ENCODE measurements at regions of chr17 and their contacts with region 1.

Region 1: DNA sequence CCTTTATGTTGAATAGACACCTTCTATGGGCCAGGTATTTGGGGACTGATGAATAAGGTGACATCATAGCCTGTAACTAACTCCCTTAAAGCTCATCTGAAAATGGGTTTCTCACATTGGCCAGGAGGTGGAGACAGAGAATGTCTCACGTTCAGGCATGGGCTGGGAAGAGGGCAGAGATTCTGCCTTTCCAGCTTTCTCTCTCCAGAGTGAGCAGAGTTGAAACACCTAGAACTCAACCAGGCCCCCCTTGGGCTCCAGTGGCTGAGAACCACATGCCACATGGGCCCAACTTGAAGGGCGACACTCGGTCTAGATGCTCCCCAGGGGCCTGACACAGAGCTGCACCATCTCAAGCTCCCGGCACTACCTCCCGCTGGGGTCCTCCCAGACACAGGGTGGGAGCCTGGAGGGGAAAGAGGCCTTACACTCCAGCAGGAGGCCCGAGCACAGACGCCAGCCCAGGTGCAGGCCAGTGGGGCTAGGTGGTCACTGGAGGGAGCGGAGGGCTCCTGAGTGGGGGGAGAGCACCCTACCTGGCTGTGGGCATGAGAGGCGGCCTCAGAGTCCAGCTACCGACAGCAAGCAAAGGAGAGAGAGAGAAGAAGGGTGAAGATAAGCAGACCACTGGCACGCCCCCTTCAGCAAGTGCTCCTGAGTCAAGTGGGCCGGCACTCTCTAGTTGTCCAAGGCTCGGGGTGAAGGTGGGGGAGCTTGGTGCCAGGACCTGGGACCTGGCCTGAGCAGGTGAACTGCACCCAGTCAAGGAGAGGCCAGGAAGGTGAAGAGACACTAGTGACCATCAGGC is 55.9 kb downstream of the MYO18A start:
- DNase-seq: peak in 6 of 9 donors; percentile 34 to 59 (median 48)
- ATAC-seq: peak; percentile 87
- H3K4me3 ChIP-seq: no peak overlapping the region
- H3K4me3 Mint-ChIP-seq: no peak overlapping the region
- H3K27ac ChIP-seq: no peak overlapping the region
- H3K27ac Mint-ChIP-seq: peak overlapping the region in 2 of 9 donors; percentile 54 to 55
- H3K4me1 ChIP-seq: no peaks in the 10 kb centered on the region
- H3K4me1 Mint-ChIP-seq: peaks cover 0 to 16% (median 5%) of the 10 kb centered on the region in 7 donors
- H3K27me3 ChIP-seq: no peaks in the 10 kb centered on the region
- H3K27me3 Mint-ChIP-seq: no peaks in the 10 kb centered on the region

Region 2: GRCh38 chr17:28518132-28518531 is 606.2 kb before region 1 on chr17:
- CTCF ChIA-PET with region 1: no interaction called
- POLR2A ChIA-PET with region 1: no interaction called
- intact Hi-C with region 1: no loop called
- DNase-seq: no peak
- ATAC-seq: peak; percentile 54
- H3K4me3 ChIP-seq: no peak overlapping the region
- H3K4me3 Mint-ChIP-seq: no peak overlapping the region
- H3K27ac ChIP-seq: no peak overlapping the region
- H3K27ac Mint-ChIP-seq: no peak overlapping the region
- H3K4me1 ChIP-seq: no peaks in the 10 kb centered on the region
- H3K4me1 Mint-ChIP-seq: peaks cover 0 to 4% (median 0%) of the 10 kb centered on the region in 7 donors
- H3K27me3 ChIP-seq: no peaks in the 10 kb centered on the region
- H3K27me3 Mint-ChIP-seq: peaks cover 6 to 21% (median 8%) of the 10 kb centered on the region in 5 donors

Region 3: DNA sequence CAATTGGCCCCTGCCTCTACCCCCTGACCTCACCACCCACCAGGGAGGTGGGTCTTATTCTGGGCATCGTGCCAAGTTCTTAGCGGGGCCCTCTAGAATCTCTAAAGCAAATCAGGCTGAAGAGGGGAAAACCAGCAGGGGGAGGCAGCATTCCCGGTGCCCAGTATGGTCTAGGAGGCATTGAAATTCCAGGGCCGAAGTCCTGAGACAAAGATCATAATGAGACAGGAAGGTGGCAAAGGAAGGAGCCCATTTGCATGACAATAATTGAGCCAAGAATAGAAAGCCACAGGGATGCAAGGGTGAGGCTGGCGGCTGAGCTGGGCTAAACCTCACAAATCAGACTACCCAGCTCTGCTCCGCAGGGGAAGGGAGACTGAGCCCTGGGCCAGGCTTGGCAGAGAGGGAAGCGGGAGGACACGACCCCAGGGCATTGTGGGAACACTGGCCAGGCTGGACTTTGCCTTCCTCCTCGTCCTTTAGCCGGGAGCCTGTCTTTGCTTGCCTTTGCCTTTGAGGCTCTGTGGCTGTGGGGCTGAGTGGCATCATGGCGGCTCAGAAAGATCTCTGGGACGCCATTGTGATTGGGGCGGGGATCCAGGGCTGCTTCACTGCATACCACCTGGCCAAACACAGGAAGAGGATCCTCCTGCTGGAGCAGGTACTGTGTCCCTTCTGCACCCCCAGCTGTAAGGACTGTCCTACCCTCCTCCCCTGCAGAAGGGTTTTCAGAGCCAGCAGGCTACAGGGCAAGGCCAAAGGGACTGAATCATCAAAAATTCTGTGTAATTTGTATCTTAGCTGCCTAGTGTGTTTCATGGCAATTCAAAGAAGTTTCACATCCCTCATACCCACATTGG is 81.4 kb before region 1 on chr17 and contains the start of gene PIPOX:
- CTCF ChIA-PET with region 1: no interaction called
- POLR2A ChIA-PET with region 1: no interaction called
- intact Hi-C with region 1: no loop called
- DNase-seq: no peak
- ATAC-seq: peak; percentile 84
- H3K4me3 ChIP-seq: no peak within 1 kb of the TSS
- H3K4me3 Mint-ChIP-seq: no peak within 1 kb of the TSS
- H3K27ac ChIP-seq: no peak within 1 kb of the TSS
- H3K27ac Mint-ChIP-seq: no peak within 1 kb of the TSS
- H3K4me1 ChIP-seq: no peaks in the 10 kb centered on the region
- H3K4me1 Mint-ChIP-seq: peaks cover 0 to 14% (median 0%) of the 10 kb centered on the region in 7 donors
- H3K27me3 ChIP-seq: no peaks in the 10 kb centered on the region
- H3K27me3 Mint-ChIP-seq: peaks cover 0 to 23% (median 12%) of the 10 kb centered on the region in 5 donors
- total RNA-seq, gene PIPOX: 1.6 to 6.4 (median 5.3) TPM

Region 4: GRCh38 chr17:29102741-29103181 is 21.6 kb before region 1 on chr17:
- CTCF ChIA-PET with region 1: no interaction called
- POLR2A ChIA-PET with region 1: no interaction called
- intact Hi-C with region 1: no loop called
- DNase-seq: no peak
- ATAC-seq: no peak
- H3K4me3 ChIP-seq: no peak overlapping the region
- H3K4me3 Mint-ChIP-seq: no peak overlapping the region
- H3K27ac ChIP-seq: no peak overlapping the region
- H3K27ac Mint-ChIP-seq: peak overlapping the region in 1 of 9 donors; percentile 14
- H3K4me1 ChIP-seq: no peaks in the 10 kb centered on the region
- H3K4me1 Mint-ChIP-seq: peaks cover 0 to 13% (median 3%) of the 10 kb centered on the region in 7 donors
- H3K27me3 ChIP-seq: no peaks in the 10 kb centered on the region
- H3K27me3 Mint-ChIP-seq: no peaks in the 10 kb centered on the region

Region 5: GRCh38 chr17:29140051-29140621 is 15.8 kb after region 1 on chr17:
- CTCF ChIA-PET with region 1: interaction called, 93 read pairs
- POLR2A ChIA-PET with region 1: interaction called, 20 read pairs
- intact Hi-C with region 1: loop called (anchors 1 kb)
- DNase-seq: peak in 8 of 9 donors; percentile 48 to 81 (median 51)
- ATAC-seq: peak; percentile 73
- H3K4me3 ChIP-seq: peak overlapping the region; percentile 76
- H3K4me3 Mint-ChIP-seq: peak overlapping the region; percentile 83 to 98 (median 91)
- H3K27ac ChIP-seq: peak overlapping the region; percentile 79
- H3K27ac Mint-ChIP-seq: peak overlapping the region; percentile 88 to 98 (median 96)
- H3K4me1 ChIP-seq: peaks cover 35 to 43% of the 10 kb centered on the region in 2 donors
- H3K4me1 Mint-ChIP-seq: peaks cover 54 to 75% (median 66%) of the 10 kb centered on the region in 7 donors
- H3K27me3 ChIP-seq: no peaks in the 10 kb centered on the region
- H3K27me3 Mint-ChIP-seq: no peaks in the 10 kb centered on the region

Region 6: GRCh38 chr17:29219378-29220047 is 95.2 kb after region 1 on chr17:
- CTCF ChIA-PET with region 1: interaction called, 17 read pairs
- POLR2A ChIA-PET with region 1: no interaction called
- intact Hi-C with region 1: loop called (anchors 1 kb)
- DNase-seq: peak; percentile 41 to 73 (median 62)
- ATAC-seq: peak; percentile 94
- H3K4me3 ChIP-seq: no peak overlapping the region
- H3K4me3 Mint-ChIP-seq: no peak overlapping the region
- H3K27ac ChIP-seq: no peak overlapping the region
- H3K27ac Mint-ChIP-seq: peak overlapping the region in 2 of 9 donors; percentile 3 to 12
- H3K4me1 ChIP-seq: no peaks in the 10 kb centered on the region
- H3K4me1 Mint-ChIP-seq: peaks cover 0 to 10% (median 5%) of the 10 kb centered on the region in 7 donors
- H3K27me3 ChIP-seq: no peaks in the 10 kb centered on the region
- H3K27me3 Mint-ChIP-seq: peaks cover 0 to 13% (median 0%) of the 10 kb centered on the region in 5 donors

Measured in naive thymus-derived CD4-positive, alpha-beta T cell (primary cell).